ENCODE measurements at regions of chr17 and their contacts with region 1.

Region 1: GRCh38 chr17:50200457-50201275 is 765 bp downstream of the COL1A1 start:
- DNase-seq: peak; percentile 87 to 95 (median 94)
- ATAC-seq: peak; percentile 78
- H3K4me3 ChIP-seq: peak overlapping the region; percentile 43 to 49
- H3K27ac ChIP-seq: peak overlapping the region; percentile 65 to 88
- H3K4me1 ChIP-seq: peaks cover 0 to 29% of the 10 kb centered on the region in 2 donors
- H3K27me3 ChIP-seq: peaks cover 7 to 58% of the 10 kb centered on the region in 2 donors
- CTCF ChIP-seq: peak; percentile 99 to 100

Region 2: DNA sequence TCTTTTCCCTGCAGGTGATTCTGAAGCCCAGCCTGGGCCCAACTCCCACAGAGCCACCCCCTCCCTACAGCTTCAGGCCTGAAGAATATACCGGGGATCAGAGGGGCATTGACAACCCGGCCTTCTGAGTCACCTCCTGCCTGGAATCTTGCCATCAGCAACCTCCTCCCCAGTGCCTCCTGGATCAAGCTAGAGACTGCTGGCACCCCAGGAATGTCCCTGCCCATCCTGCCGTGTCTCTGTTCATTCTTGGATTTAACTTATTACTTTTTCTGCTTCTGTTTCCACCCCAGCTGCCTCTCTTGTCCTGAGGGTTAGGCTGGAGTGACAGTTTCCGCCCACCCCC is 78.5 kb after region 1 on chr17:
- intact Hi-C with region 1: loop called (anchors 5 kb)
- DNase-seq: no peak
- ATAC-seq: no peak
- H3K4me3 ChIP-seq: no peak overlapping the region
- H3K27ac ChIP-seq: no peak overlapping the region
- H3K4me1 ChIP-seq: peaks cover 0 to 64% of the 10 kb centered on the region in 2 donors
- H3K27me3 ChIP-seq: peaks cover 0 to 27% of the 10 kb centered on the region in 2 donors
- CTCF ChIP-seq: no peak